GM10248 (cell line): ENCODE measurements at regions of chr2 and their contacts with region 1.

Region 1: DNA sequence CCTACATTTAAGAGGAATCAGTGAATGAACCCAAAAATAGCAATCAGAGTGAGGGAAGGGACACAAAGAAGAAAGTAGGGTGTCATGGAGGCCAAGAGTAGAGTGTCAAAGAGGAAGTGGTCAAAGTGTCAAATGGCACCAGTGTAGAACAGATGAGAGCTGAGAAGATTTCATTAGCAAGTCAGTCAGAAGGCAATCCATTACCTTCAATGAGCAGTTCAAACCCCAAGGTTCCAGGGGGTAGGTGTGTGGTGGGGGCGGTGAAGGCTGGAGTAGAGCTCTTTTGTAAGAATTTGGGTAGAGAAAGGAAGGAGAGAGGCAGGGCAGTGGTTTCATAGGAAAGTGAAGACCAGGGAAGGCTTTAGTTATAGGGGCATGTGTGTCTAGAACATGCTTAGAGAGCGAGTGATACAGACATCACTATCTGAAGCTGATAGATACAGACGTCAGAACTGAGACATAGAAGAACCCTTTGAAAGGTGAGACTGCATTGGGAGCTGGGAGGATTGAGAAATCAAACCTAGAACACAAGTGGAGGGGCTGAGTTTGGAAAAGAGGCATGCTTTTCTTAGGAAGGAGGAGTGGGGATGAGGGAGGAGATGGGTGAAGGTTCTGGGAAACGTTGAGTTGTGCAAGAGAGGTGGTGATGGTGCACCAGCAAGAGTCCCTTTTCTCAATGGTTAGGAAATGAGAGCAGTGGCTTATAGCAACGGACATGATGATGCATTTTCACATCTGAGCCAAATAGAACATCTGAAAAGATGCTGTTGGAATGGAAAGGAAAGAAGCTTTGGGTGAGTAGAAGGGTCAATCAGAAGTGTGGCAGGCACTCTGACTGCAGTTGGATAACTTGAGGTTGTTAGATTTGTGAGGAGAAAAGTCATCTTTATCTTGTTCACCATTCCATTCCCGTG is 48.9 kb upstream of the IL1RL1 start:
- DNase-seq: no peak
- CTCF ChIP-seq: no peak

Region 2: GRCh38 chr2:102251042-102251848 is 11.2 kb before region 1 on chr2:
- CTCF ChIA-PET with region 1: interaction called, 12 read pairs
- POLR2A ChIA-PET with region 1: no interaction called
- DNase-seq: peak; percentile 72
- CTCF ChIP-seq: peak; percentile 75